ENCODE measurements at regions of chr13 and their contacts with region 1.

Region 1: GRCh38 chr13:32200749-32201148 is 114.4 kb downstream of the ZAR1L start:
- DNase-seq: no peak
- H3K4me3 ChIP-seq: no peak overlapping the region
- H3K27ac ChIP-seq: no peak overlapping the region
- H3K4me1 ChIP-seq: no peaks in the 10 kb centered on the region
- CTCF ChIP-seq: no peak

Region 2: DNA sequence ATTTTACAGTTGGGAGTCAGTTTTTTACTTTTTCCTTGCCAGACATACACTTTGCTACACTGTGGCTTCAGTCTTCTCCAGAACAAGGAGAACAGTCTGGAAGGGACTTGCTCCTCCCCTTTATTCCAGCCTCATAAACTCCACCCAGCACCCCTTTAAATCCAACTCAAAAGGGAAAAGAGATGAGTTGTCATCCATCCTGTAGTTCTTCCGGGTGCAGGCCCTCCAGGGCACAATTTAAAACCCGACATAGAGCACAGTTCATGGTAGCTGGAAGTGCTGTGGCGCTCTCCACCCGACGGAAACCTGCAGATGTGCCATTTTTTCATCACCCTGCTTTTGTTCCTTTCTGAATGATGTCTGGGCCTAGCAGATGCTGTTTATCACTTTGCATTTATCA is 15.5 kb after region 1 on chr13:
- CTCF ChIA-PET with region 1: no interaction called
- POLR2A ChIA-PET with region 1: interaction called, 10 read pairs
- intact Hi-C with region 1: no loop called
- DNase-seq: no peak
- H3K4me3 ChIP-seq: no peak overlapping the region
- H3K27ac ChIP-seq: no peak overlapping the region
- H3K4me1 ChIP-seq: no peaks in the 10 kb centered on the region
- CTCF ChIP-seq: no peak